Left ventricle myocardium superior (tissue), 1 donor: ENCODE measurements at regions of chr14 and their contacts with region 1.

Region 1: GRCh38 chr14:29548948-29549370 is 378.7 kb downstream of the PRKD1 start:
- DNase-seq: no peak
- ATAC-seq: peak; percentile 61

Region 2: DNA sequence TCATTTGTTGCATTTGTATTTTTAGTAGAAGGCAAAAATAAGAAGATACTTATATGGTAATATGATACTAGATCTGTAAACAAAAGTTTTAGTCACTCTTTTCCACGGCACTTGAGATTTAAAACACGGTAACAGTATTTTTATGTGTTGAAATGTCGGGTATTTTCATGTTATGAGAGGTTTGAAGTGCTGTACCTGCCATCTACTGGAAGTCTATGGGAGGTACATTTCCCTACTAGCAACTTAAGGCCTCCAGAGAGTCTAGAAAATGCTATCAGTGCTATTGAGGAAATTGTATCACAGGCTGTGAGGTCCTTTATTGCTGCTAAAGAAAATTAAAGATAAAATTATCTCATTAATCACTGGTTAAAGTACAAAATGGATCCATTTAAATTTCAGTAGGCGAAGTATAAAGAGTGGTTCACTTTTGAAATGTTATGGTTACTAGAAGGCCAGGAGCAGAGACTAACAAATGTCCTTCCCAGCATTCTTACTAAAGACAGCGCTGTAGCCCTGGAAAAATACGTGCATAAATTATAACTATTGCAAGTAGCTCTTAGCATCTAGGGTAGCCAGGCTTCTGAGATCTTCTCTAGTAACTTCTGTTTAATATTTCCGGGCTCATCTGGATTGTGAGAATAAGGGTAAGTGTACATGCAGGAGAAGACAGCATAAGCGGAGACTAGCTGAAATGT is 456.3 kb after region 1 on chr14:
- intact Hi-C with region 1: loop called (anchors 1 kb)
- DNase-seq: no peak
- ATAC-seq: peak; percentile 68

Region 3: GRCh38 chr14:30214461-30215090 is 665.6 kb after region 1 on chr14:
- intact Hi-C with region 1: loop called (anchors 5 kb)
- DNase-seq: no peak
- ATAC-seq: peak; percentile 31